ENCODE measurements at regions of chr11 and their contacts with region 1.

Region 1: DNA sequence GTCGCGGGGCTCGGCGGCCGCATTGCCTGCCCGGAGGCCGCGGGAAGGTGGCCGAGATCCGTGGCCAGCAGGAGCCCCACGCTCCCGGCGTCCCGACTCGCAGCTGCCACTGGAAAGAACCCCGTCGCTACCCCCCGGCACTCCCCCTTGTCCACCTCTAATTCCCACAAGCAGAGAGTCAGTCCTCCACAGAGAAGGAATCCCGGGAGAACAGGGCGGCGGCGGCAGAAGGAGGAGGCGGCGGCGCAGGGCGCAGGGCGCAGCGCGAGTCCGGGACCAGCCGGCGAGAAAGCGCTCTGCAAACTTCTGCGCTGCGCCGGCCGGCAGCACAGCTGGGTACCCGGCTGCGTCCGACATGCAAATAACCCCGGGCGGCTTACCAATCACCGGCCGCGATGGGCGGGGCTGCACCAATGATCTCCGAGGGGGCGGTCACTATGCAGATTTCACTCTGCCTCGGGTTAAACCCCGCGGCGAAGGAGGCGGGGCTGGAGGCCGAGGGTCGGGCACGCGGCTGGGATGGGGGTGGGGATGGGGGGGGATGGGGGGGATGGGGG is at the start of gene ABTB2:
- DNase-seq: peak; percentile 99
- ATAC-seq: peak; percentile 96 to 98
- H3K4me3 ChIP-seq: peak within 1 kb of the TSS; percentile 71
- H3K27ac ChIP-seq: peak within 1 kb of the TSS; percentile 59
- H3K4me1 ChIP-seq: peaks cover 31% of the 10 kb centered on the region
- H3K27me3 ChIP-seq: peaks cover 19% of the 10 kb centered on the region
- CTCF ChIP-seq: no peak
- total RNA-seq, gene ABTB2: 2.7 TPM

Region 2: DNA sequence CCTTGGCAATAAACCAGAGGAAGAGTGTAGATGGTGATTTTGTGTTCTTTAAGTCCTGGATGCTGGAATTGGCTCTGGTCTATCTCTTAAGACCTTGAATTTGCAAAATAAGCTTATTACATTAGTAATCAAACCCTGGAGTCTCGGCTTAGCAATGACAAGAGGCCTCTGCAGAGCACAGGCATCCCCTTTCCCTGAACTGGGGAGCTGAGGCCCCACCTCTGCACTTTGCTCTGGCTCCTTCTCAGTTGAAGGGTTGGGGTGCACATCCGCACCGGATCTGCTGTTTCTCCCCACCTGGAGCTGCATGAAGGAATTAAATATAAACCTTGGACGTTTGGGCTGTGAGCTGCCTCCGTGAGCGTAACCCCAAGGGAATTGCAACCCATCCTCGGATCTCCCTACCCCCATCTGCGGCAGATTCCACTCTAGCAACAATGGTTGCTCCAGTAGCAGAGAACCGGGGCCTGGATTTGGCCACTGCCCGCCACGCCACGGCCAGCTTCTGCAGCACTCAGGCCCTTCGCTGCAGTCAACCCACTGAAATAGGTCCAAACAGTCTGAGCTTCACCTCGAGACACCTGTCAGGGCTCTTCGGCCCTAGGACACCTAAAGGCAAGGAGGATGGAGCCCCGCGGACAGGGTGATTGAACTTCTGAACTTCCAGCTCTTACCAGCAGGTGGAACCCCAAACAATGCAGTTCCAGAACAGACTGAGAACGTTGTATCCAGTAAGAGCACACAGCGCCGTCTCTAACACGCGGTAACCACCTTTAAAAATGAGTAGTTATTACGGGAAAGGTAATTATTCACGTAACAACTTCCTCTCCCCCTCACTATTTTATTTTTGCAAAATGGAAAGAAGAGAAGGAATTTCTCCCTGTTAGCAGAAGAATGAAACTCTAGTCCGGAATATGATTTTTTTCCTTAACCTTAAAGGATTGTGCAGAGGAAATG is 361.0 kb before region 1 on chr11:
- intact Hi-C with region 1: loop called (anchors 5 kb)
- DNase-seq: peak; percentile 56
- ATAC-seq: peak; percentile 94 to 98
- H3K4me3 ChIP-seq: no peak overlapping the region
- H3K27ac ChIP-seq: no peak overlapping the region
- H3K4me1 ChIP-seq: peaks cover 9% of the 10 kb centered on the region
- H3K27me3 ChIP-seq: peaks cover 5% of the 10 kb centered on the region
- CTCF ChIP-seq: peak; percentile 77

Region 3: DNA sequence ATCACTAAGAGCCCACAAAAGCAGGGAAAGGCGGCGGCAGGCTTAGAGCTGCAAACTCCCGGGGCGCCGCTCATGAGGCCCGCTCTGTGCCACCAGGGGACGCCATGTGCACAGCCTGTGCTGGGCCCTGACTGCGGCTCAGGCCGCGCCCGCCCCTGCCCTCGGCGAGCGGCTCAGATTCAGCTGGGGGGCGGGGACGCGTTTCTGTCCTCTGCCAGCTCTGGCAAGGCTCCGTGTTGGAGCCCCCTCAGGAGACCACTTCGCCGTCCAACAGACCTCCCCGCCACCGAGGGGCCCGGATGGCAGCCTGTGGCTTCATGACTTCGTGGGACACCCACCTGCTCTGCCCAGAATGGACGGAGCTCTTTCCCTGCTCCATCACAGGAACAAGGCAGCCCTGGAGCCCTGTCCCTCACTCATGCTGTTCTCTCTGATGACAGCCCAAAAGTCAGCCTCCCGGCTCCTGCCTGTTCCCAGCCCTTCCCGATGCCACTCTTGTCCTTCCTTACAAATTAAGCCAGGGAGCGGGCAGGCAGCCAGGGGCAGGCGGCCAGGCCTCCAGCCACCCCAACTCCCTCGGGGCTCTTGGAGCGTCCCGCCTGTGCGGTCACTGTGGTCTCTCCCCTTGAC is 183.3 kb before region 1 on chr11:
- intact Hi-C with region 1: loop called (anchors 5 kb)
- DNase-seq: peak; percentile 88
- ATAC-seq: peak; percentile 96 to 99
- H3K4me3 ChIP-seq: peak overlapping the region; percentile 36
- H3K27ac ChIP-seq: no peak overlapping the region
- H3K4me1 ChIP-seq: peaks cover 14% of the 10 kb centered on the region
- H3K27me3 ChIP-seq: peaks cover 7% of the 10 kb centered on the region
- CTCF ChIP-seq: peak; percentile 92